Pancreas (tissue), 10 donors: ENCODE measurements at regions of chr1 and their contacts with region 1.

Region 1: GRCh38 chr1:182084487-182085316 is 23.2 kb upstream of the ZNF648 start:
- DNase-seq: peak; percentile 76 to 94 (median 90)
- ATAC-seq: peak; percentile 97 to 98 (median 98)
- H3K4me3 ChIP-seq: no peak overlapping the region
- H3K27ac ChIP-seq: peak overlapping the region in 1 of 4 donors; percentile 25
- H3K4me1 ChIP-seq: peaks cover 0 to 4% (median 0%) of the 10 kb centered on the region in 3 donors
- H3K27me3 ChIP-seq: no peaks in the 10 kb centered on the region
- CTCF ChIP-seq: peak; percentile 81 to 85 (median 84)

Region 2: GRCh38 chr1:182143154-182143657 is 58.5 kb after region 1 on chr1:
- intact Hi-C with region 1: loop called in 2 of 3 experiments (anchors 10 kb)
- DNase-seq: peak; percentile 80 to 100 (median 92)
- ATAC-seq: peak; percentile 77 to 85 (median 80)
- H3K4me3 ChIP-seq: no peak overlapping the region
- H3K27ac ChIP-seq: peak overlapping the region in 3 of 4 donors; percentile 68 to 90 (median 84)
- H3K4me1 ChIP-seq: peaks cover 32 to 37% (median 35%) of the 10 kb centered on the region in 3 donors
- H3K27me3 ChIP-seq: no peaks in the 10 kb centered on the region
- CTCF ChIP-seq: peak; percentile 85 to 95 (median 94)

Region 3: GRCh38 chr1:182391362-182392044 is 306.8 kb after region 1 on chr1 and contains the start of gene GLUL:
- intact Hi-C with region 1: loop called in 2 of 3 experiments (anchors 5 kb)
- DNase-seq: peak; percentile 90 to 98 (median 94)
- ATAC-seq: peak; percentile 84 to 91 (median 88)
- H3K4me3 ChIP-seq: peak within 1 kb of the TSS; percentile 80 to 95 (median 90)
- H3K27ac ChIP-seq: peak within 1 kb of the TSS; percentile 92 to 99 (median 96)
- H3K4me1 ChIP-seq: peaks cover 2 to 17% (median 17%) of the 10 kb centered on the region in 3 donors
- H3K27me3 ChIP-seq: no peaks in the 10 kb centered on the region
- CTCF ChIP-seq: peak in 1 of 4 donors; percentile 29
- total RNA-seq, gene GLUL: 261 to 512 (median 332) TPM

Region 4: GRCh38 chr1:182397771-182398393 is 313.2 kb after region 1 on chr1:
- intact Hi-C with region 1: loop called in 2 of 3 experiments (anchors 5 kb)
- DNase-seq: no peak
- ATAC-seq: no peak
- H3K4me3 ChIP-seq: no peak overlapping the region
- H3K27ac ChIP-seq: peak overlapping the region in 2 of 4 donors; percentile 24 to 56
- H3K4me1 ChIP-seq: peaks cover 0 to 3% (median 0%) of the 10 kb centered on the region in 3 donors
- H3K27me3 ChIP-seq: no peaks in the 10 kb centered on the region
- CTCF ChIP-seq: no peak

Region 5: GRCh38 chr1:182404781-182405180 is 320.1 kb after region 1 on chr1:
- intact Hi-C with region 1: loop called in 2 of 3 experiments (anchors 5 kb)
- DNase-seq: no peak
- ATAC-seq: no peak
- H3K4me3 ChIP-seq: no peak overlapping the region
- H3K27ac ChIP-seq: no peak overlapping the region
- H3K4me1 ChIP-seq: peaks cover 0 to 7% (median 0%) of the 10 kb centered on the region in 3 donors
- H3K27me3 ChIP-seq: no peaks in the 10 kb centered on the region
- CTCF ChIP-seq: no peak

Region 6: DNA sequence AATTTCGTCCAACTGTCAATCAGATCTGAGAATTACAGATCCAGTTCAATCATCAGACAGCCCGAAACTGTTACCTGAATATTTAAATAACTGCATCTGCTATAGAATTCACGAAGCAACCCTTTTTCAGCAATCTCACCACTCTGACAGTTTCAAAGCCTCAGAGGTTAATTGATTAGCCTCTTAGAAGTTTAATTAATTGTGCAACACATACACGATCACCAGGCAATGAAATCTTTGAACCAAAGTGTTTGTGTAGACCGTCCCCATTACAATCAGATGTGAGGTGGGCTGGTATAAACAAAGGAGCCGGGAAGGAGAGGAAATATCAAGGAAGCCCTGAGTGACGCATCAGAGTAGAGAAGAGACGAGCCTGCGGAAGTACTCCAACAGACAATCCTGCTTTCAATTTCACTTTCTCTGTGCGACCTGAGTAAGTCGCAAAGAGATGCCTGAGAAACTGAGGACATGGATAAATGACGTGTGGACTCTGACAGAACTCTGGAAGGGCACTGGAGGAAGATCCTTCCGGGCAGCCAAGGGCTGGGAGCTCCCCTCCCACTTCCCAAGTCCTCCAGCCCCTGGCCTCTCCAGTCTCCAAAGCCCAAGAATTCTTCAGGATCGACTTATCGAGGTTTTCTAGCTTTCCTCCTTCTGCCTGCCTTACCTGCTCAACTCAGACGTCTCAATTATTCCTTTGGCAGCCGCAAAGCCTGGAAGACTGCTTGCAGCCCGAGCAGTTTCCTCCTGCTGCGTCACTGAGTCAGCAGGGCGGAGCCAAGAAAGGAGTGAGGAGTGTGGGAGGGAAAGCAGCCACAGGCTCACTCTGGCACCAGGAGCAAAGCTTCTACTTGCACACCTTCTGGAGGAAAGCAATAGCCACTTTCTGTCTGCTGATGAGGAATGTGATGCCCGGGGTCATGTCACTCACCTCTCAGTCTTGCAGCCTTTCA is 504.1 kb after region 1 on chr1 and contains the start of gene RNASEL:
- intact Hi-C with region 1: loop called in 1 of 3 experiments (anchors 10 kb)
- DNase-seq: peak; percentile 70 to 87 (median 76)
- ATAC-seq: peak; percentile 94 to 98 (median 96)
- H3K4me3 ChIP-seq: peak within 1 kb of the TSS; percentile 33 to 59 (median 52)
- H3K27ac ChIP-seq: peak within 1 kb of the TSS; percentile 75 to 92 (median 83)
- H3K4me1 ChIP-seq: peaks cover 0 to 7% (median 5%) of the 10 kb centered on the region in 3 donors
- H3K27me3 ChIP-seq: no peaks in the 10 kb centered on the region
- CTCF ChIP-seq: no peak
- total RNA-seq, gene RNASEL: 1.1 to 7.0 (median 2.7) TPM

Region 7: GRCh38 chr1:182781841-182782586 is 697.3 kb after region 1 on chr1:
- intact Hi-C with region 1: loop called in 1 of 3 experiments (anchors 5 kb)
- DNase-seq: peak; percentile 46 to 76 (median 55)
- ATAC-seq: peak; percentile 66 to 88 (median 85)
- H3K4me3 ChIP-seq: no peak overlapping the region
- H3K27ac ChIP-seq: no peak overlapping the region
- H3K4me1 ChIP-seq: peaks cover 0 to 4% (median 0%) of the 10 kb centered on the region in 3 donors
- H3K27me3 ChIP-seq: no peaks in the 10 kb centered on the region
- CTCF ChIP-seq: peak; percentile 34 to 58 (median 45)